ENCODE measurements at regions of chr21 and their contacts with region 1.

Region 1: GRCh38 chr21:36028127-36029069 is 31.9 kb downstream of the SETD4 start:
- DNase-seq: peak; percentile 77
- ATAC-seq: peak; percentile 93
- H3K4me3 Mint-ChIP-seq: no peak overlapping the region
- H3K27ac Mint-ChIP-seq: no peak overlapping the region
- H3K4me1 Mint-ChIP-seq: peaks cover 5% of the 10 kb centered on the region
- H3K27me3 Mint-ChIP-seq: no peaks in the 10 kb centered on the region

Region 2: DNA sequence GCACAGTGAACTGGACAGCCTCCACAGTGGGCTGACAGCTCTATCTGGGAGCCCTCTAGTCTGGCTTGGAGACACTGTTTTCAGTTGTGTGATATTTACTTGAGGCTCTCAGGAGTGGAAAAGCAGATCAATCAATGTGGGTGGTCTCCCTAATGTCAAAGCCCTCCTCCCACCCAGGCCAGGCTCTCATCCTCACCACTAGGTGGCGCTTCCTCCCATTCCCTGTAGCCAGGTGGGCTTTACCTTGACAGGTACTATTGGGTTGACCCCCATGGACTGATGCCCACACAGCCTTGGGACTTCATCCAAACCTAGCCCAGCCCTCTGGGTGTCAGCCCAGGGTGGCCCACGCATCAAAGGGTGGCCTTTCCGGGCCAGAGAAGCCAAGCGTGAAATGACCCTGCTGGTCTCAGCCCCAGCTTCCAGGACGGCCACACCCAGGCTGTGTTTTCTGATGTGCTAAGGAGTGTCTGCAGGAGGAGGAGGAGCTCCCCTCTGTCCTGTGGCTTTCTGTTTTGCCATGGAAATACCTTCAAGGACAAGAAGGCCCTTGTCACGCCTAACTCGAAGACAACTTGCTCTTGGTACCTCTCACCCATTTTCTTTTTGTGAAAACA is 1305.6 kb before region 1 on chr21:
- CTCF ChIA-PET with region 1: no interaction called
- POLR2A ChIA-PET with region 1: no interaction called
- intact Hi-C with region 1: loop called in 1 of 2 experiments (anchors 5 kb)
- DNase-seq: peak; percentile 49
- ATAC-seq: no peak
- H3K4me3 Mint-ChIP-seq: no peak overlapping the region
- H3K27ac Mint-ChIP-seq: no peak overlapping the region
- H3K4me1 Mint-ChIP-seq: no peaks in the 10 kb centered on the region
- H3K27me3 Mint-ChIP-seq: peaks cover 4% of the 10 kb centered on the region

Region 3: DNA sequence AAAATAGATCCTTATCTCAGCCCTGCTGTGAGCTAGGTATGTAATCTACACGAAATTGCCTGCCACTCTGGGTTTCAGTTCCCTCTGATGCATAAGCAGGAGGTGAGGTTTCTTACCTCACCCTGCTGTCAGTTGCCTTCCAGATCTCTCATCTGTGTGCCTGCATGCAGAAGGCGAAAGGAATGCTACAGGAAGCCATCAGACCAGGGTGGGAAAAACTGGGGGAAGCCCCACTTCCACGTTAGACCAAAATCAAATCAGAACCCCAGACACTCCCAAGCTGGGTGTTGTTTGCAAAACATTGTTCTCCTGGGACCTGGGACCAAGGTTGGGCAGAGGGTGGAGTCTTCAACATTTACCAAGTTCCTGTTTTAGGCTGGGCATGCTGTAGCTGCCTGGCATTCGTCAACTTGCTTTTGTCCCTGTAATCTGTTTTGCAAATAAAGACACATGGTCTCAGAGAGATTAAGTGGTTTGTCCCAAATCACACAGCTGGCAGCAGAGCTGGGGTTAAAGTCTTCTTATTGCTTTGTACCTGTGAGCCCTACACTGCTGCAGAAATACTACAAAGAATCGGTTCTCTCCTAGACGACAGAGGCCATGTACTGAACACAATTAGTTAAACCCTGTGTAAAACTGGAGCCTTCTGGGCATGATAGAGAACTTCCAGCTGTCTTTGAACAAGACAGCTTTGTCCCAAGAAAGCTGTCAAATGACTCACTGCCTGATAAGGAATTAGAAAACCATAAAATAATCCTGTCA is 589.6 kb before region 1 on chr21:
- CTCF ChIA-PET with region 1: no interaction called
- POLR2A ChIA-PET with region 1: no interaction called
- intact Hi-C with region 1: loop called in 1 of 2 experiments (anchors 10 kb)
- DNase-seq: peak; percentile 46
- ATAC-seq: peak; percentile 91
- H3K4me3 Mint-ChIP-seq: no peak overlapping the region
- H3K27ac Mint-ChIP-seq: no peak overlapping the region
- H3K4me1 Mint-ChIP-seq: peaks cover 22% of the 10 kb centered on the region
- H3K27me3 Mint-ChIP-seq: peaks cover 7% of the 10 kb centered on the region

Region 4: DNA sequence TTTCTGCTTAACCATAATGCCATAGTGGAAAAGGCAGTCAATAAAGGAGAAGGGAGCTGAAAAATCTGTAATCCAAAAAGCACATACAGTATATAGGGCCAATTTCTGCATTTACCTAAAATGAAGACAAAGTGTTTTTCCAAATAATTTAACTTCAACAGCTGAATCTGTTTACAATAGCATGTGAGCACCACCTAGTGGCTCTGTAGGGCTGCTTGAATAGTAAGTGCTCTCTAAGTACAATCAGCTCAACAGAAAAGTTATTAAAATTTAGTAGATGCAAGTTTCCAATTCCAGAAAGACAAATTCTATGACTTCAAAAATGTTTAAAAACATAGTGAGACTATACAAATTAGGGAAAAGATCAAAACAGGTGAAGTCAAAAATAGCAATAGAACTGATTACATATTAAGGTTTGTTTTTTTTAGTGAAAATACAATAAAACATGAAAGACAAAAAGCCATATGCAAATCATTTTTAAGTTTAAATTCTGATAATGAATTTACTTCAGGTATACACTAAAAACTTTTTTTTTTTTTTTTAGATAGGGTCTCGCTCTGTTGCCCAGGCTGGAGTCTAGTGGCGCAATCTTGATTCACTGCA is 188.1 kb before region 1 on chr21:
- CTCF ChIA-PET with region 1: interaction called, 10 read pairs
- POLR2A ChIA-PET with region 1: no interaction called
- intact Hi-C with region 1: loop called (anchors 1 to 10 kb)
- DNase-seq: peak; percentile 73
- ATAC-seq: no peak
- H3K4me3 Mint-ChIP-seq: no peak overlapping the region
- H3K27ac Mint-ChIP-seq: no peak overlapping the region
- H3K4me1 Mint-ChIP-seq: peaks cover 2% of the 10 kb centered on the region
- H3K27me3 Mint-ChIP-seq: no peaks in the 10 kb centered on the region

Region 5: DNA sequence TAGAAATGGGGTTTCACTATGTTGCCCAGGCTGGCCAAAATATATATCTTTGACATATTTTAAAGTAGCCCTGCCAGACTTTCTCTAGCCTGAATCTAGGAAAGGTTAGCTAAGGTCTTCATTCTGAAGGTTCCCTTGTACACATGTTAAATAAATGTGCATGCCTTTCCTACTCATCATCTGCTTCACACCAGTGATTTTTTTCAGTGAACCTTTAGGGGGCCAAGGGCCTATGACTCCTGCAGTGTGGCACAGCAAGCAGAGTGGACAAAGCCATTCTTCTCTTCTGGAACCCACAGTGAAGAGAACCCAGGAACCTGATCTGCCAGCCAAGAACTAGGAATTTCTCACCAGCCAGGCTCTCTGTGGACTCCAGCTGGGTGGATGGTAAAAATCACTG is 64.3 kb after region 1 on chr21:
- CTCF ChIA-PET with region 1: no interaction called
- POLR2A ChIA-PET with region 1: no interaction called
- intact Hi-C with region 1: no loop called
- DNase-seq: no peak
- ATAC-seq: no peak
- H3K4me3 Mint-ChIP-seq: no peak overlapping the region
- H3K27ac Mint-ChIP-seq: no peak overlapping the region
- H3K4me1 Mint-ChIP-seq: no peaks in the 10 kb centered on the region
- H3K27me3 Mint-ChIP-seq: peaks cover 7% of the 10 kb centered on the region